CD4-positive, alpha-beta T cell (primary cell): ENCODE measurements at regions of chr7 and their contacts with region 1.

Region 1: DNA sequence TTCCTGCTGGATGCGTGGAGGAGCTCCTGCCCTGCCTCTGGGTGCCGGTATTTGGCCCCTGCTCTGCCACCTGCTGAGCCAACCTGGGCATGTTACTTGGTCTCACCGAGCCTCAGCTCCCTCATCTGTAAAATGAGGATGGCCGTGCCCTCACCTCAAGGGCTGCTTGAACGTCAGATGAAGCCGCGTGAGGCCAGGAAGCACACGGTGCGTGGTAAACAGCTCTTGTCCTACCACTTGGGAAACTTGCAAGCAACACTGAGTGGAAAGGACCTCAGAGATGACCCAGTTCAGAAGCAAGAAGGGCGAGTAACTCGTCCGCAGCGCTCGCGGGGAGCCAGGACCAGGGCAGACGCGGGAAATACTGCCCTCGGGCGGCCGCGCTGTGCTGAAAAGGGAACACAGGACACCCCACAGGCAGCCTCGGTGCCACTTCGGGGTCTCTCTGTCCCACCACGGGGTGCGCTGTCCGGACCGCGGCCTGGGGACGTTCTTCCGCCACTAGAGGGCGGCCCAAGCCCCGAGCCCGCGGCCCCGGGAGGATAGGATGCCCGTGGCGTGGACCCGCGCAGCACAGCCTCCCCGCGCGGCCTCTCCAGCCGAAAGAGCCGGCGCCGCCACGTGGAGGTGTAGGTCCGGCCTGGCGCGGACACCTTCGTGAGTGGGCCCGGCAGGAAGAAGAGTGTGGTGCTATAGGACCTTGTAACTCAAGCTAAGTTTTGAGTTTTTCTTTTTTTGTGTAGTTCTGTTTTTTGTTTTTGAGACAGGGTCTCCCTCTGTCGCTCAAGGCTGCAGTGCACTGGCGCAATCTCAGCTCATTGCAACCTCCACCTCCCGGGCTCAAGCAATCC is 94.1 kb downstream of the PRKAG2 start:
- DNase-seq: peak; percentile 41 to 83 (median 58)
- ATAC-seq: peak; percentile 82
- H3K4me3 ChIP-seq: peak overlapping the region; percentile 38
- H3K4me3 Mint-ChIP-seq: peak overlapping the region; percentile 87
- H3K27ac ChIP-seq: no peak overlapping the region
- H3K27ac Mint-ChIP-seq: peak overlapping the region; percentile 76
- H3K4me1 ChIP-seq: peaks cover 11% of the 10 kb centered on the region
- H3K4me1 Mint-ChIP-seq: peaks cover 10% of the 10 kb centered on the region
- H3K27me3 ChIP-seq: no peaks in the 10 kb centered on the region
- H3K27me3 Mint-ChIP-seq: no peaks in the 10 kb centered on the region
- CTCF ChIP-seq: peak; percentile 96

Region 2: GRCh38 chr7:151626422-151627115 is 156.3 kb before region 1 on chr7:
- CTCF ChIA-PET with region 1: interaction called, 8 read pairs
- POLR2A ChIA-PET with region 1: no interaction called
- intact Hi-C with region 1: loop called in 1 of 2 experiments (anchors 1 kb)
- DNase-seq: peak in 10 of 14 experiments; percentile 6 to 62 (median 23)
- ATAC-seq: peak; percentile 64
- H3K4me3 ChIP-seq: no peak overlapping the region
- H3K4me3 Mint-ChIP-seq: peak overlapping the region; percentile 16
- H3K27ac ChIP-seq: no peak overlapping the region
- H3K27ac Mint-ChIP-seq: no peak overlapping the region
- H3K4me1 ChIP-seq: peaks cover 13% of the 10 kb centered on the region
- H3K4me1 Mint-ChIP-seq: peaks cover 65% of the 10 kb centered on the region
- H3K27me3 ChIP-seq: no peaks in the 10 kb centered on the region
- H3K27me3 Mint-ChIP-seq: no peaks in the 10 kb centered on the region
- CTCF ChIP-seq: peak; percentile 35

Region 3: DNA sequence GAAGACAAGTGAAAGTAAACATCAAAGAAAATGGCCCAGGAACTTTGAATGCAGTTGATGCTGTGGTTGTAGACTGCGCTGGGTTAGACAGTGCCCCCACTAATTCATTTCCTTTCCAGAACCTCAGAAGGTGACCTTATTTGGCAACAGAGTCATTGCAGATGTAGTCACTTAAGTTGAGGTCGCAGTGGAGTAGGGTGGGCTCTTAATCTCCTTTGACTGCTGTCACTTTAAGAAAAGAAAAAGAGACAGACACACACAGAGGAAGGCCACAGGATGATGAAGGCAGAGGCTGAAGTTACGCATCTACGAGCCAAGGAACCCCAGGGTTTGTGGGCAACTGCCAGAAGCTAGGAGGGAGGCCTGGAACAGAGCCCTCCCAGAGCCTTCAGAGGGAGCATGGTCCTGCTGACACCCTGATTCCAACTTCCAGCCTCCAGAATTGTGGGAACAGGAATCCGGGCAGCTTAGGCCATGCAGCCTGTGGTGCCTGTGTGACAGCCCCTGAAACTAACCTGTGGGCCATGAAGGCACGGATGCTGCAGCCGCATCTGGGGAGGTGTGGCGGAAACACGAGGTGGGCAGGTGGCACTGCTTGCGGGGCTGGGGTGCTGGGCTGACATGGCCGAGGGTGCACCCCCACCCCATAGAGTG is 13.5 kb before region 1 on chr7:
- CTCF ChIA-PET with region 1: interaction called, 8 read pairs
- POLR2A ChIA-PET with region 1: interaction called, 3 read pairs
- intact Hi-C with region 1: loop called in 1 of 2 experiments (anchors 2 kb)
- DNase-seq: peak in 13 of 14 experiments; percentile 15 to 81 (median 26)
- ATAC-seq: peak; percentile 88
- H3K4me3 ChIP-seq: peak overlapping the region; percentile 33
- H3K4me3 Mint-ChIP-seq: peak overlapping the region; percentile 54
- H3K27ac ChIP-seq: peak overlapping the region; percentile 68 to 80
- H3K27ac Mint-ChIP-seq: peak overlapping the region; percentile 89
- H3K4me1 ChIP-seq: peaks cover 58% of the 10 kb centered on the region
- H3K4me1 Mint-ChIP-seq: peaks cover 64% of the 10 kb centered on the region
- H3K27me3 ChIP-seq: no peaks in the 10 kb centered on the region
- H3K27me3 Mint-ChIP-seq: no peaks in the 10 kb centered on the region
- CTCF ChIP-seq: no peak

Region 4: DNA sequence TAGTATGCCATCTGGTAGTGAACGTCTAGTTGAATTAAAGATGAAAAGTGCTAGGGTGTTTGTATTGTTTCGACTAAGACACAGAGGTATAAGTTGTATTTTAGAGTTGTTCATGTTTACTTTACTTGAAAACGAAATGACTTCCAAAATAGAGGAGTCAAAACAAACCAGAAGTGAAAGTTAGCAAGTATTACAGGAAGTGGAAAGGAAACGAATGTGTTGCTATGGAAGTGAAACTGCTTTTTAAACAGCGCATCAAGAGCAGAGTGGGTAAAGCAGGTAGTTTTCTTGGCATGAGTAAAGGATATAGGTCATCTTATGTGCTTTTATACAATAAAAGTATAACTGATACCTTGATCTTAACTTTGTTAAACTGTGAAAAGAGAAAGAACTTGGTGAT is 153.4 kb after region 1 on chr7:
- CTCF ChIA-PET with region 1: no interaction called
- POLR2A ChIA-PET with region 1: no interaction called
- intact Hi-C with region 1: loop called in 1 of 2 experiments (anchors 5 kb)
- DNase-seq: peak in 3 of 14 experiments; percentile 76 to 84 (median 77)
- ATAC-seq: peak; percentile 88
- H3K4me3 ChIP-seq: peak overlapping the region; percentile 38
- H3K4me3 Mint-ChIP-seq: peak overlapping the region; percentile 87
- H3K27ac ChIP-seq: peak overlapping the region; percentile 49 to 80
- H3K27ac Mint-ChIP-seq: peak overlapping the region; percentile 89
- H3K4me1 ChIP-seq: peaks cover 18% of the 10 kb centered on the region
- H3K4me1 Mint-ChIP-seq: peaks cover 25% of the 10 kb centered on the region
- H3K27me3 ChIP-seq: no peaks in the 10 kb centered on the region
- H3K27me3 Mint-ChIP-seq: no peaks in the 10 kb centered on the region
- CTCF ChIP-seq: no peak

Region 5: GRCh38 chr7:151992375-151992774 is 209.6 kb after region 1 on chr7:
- CTCF ChIA-PET with region 1: no interaction called
- POLR2A ChIA-PET with region 1: no interaction called
- intact Hi-C with region 1: loop called in 1 of 2 experiments (anchors 10 kb)
- DNase-seq: peak; percentile 12 to 72 (median 40)
- ATAC-seq: peak; percentile 99
- H3K4me3 ChIP-seq: no peak overlapping the region
- H3K4me3 Mint-ChIP-seq: no peak overlapping the region
- H3K27ac ChIP-seq: no peak overlapping the region
- H3K27ac Mint-ChIP-seq: no peak overlapping the region
- H3K4me1 ChIP-seq: peaks cover 4% of the 10 kb centered on the region
- H3K4me1 Mint-ChIP-seq: peaks cover 6% of the 10 kb centered on the region
- H3K27me3 ChIP-seq: peaks cover 0 to 7% of the 10 kb centered on the region in 2 experiments
- H3K27me3 Mint-ChIP-seq: peaks cover 69% of the 10 kb centered on the region
- CTCF ChIP-seq: no peak

Region 6: GRCh38 chr7:152145853-152146466 is 363.1 kb after region 1 on chr7:
- CTCF ChIA-PET with region 1: no interaction called
- POLR2A ChIA-PET with region 1: no interaction called
- intact Hi-C with region 1: loop called (anchors 2 kb)
- DNase-seq: peak in 11 of 14 experiments; percentile 17 to 69 (median 30)
- ATAC-seq: no peak
- H3K4me3 ChIP-seq: no peak overlapping the region
- H3K4me3 Mint-ChIP-seq: peak overlapping the region; percentile 50
- H3K27ac ChIP-seq: peak overlapping the region; percentile 26 to 77
- H3K27ac Mint-ChIP-seq: peak overlapping the region; percentile 96
- H3K4me1 ChIP-seq: peaks cover 43% of the 10 kb centered on the region
- H3K4me1 Mint-ChIP-seq: peaks cover 48% of the 10 kb centered on the region
- H3K27me3 ChIP-seq: no peaks in the 10 kb centered on the region
- H3K27me3 Mint-ChIP-seq: no peaks in the 10 kb centered on the region
- CTCF ChIP-seq: peak; percentile 66

Region 7: GRCh38 chr7:153022475-153023193 is 1239.8 kb after region 1 on chr7:
- CTCF ChIA-PET with region 1: no interaction called
- POLR2A ChIA-PET with region 1: no interaction called
- intact Hi-C with region 1: no loop called
- DNase-seq: no peak
- ATAC-seq: no peak
- H3K4me3 ChIP-seq: no peak overlapping the region
- H3K4me3 Mint-ChIP-seq: no peak overlapping the region
- H3K27ac ChIP-seq: no peak overlapping the region
- H3K27ac Mint-ChIP-seq: no peak overlapping the region
- H3K4me1 ChIP-seq: no peaks in the 10 kb centered on the region
- H3K4me1 Mint-ChIP-seq: no peaks in the 10 kb centered on the region
- H3K27me3 ChIP-seq: no peaks in the 10 kb centered on the region
- H3K27me3 Mint-ChIP-seq: no peaks in the 10 kb centered on the region
- CTCF ChIP-seq: no peak